ENCODE measurements at regions of chr18 and their contacts with region 1.

Region 1: GRCh38 chr18:21600526-21601410 is at the start of gene ESCO1:
- DNase-seq: peak; percentile 92
- ATAC-seq: peak; percentile 85
- H3K4me3 Mint-ChIP-seq: peak within 1 kb of the TSS; percentile 98
- H3K27ac Mint-ChIP-seq: peak within 1 kb of the TSS; percentile 100
- H3K4me1 Mint-ChIP-seq: peaks cover 14% of the 10 kb centered on the region
- H3K27me3 Mint-ChIP-seq: peaks cover 11% of the 10 kb centered on the region
- CTCF ChIP-seq: peak; percentile 98
- total RNA-seq, gene ESCO1: 35.2 to 46.5 TPM (median 35.5 TPM) in 3 replicates

Region 2: DNA sequence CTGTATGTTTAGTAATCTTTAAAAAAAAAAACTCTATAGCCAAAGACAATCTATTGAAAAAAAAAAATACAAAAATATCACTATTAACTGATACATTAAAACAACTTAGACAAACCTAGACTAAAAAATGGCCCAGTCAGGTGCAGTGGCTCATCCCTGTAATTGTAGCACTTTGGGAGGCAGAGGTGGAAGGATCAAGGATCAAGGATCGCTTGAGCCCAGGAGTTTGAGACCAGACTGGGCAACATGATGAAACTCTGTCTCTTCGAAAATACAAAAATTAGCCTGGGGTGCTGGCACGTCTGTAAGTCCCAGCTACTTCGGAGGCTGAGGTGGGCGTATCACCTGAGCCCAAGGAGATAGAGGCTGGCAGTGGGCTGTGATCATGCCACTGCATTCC is 16.4 kb before region 1 on chr18:
- CTCF ChIA-PET with region 1: interaction called, 14 read pairs
- POLR2A ChIA-PET with region 1: no interaction called
- DNase-seq: no peak
- ATAC-seq: no peak
- H3K4me3 Mint-ChIP-seq: no peak overlapping the region
- H3K27ac Mint-ChIP-seq: no peak overlapping the region
- H3K4me1 Mint-ChIP-seq: no peaks in the 10 kb centered on the region
- H3K27me3 Mint-ChIP-seq: no peaks in the 10 kb centered on the region
- CTCF ChIP-seq: no peak

Region 3: DNA sequence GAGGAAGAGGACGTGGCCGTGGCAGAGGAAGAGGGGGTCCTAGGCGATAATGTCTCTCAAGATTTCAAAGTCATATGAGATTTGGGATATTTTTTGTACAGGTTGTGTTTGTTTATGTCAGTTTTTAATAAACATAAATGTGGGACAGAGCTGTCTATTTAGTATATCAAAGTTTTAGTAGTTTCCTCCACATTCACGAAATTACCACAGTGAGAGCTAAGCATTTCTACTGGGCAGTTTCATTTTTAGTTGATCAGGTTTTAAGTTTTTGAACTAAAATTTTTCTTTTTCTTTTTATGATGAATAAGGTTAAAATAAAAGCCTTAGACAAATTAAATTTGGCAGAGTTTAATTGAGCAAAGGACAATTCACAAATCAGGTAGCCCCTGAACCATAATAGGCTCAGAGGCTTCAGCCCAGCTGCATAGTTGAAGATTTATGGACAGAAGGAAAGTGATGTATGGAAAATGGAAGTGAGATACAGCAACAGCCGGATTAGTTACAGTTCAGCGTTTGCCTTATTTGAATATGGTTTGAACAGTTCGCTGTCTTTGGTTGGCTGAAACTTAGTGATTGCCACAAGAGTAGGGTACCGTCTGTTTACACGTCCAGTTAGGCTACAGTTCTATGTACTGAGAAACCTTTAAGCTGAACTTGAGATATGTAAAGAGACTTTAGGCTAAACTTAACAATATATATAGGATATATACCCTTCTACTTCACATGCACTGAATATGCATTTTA is 28.5 kb after region 1 on chr18:
- CTCF ChIA-PET with region 1: interaction called, 12 read pairs
- POLR2A ChIA-PET with region 1: no interaction called
- DNase-seq: no peak
- ATAC-seq: no peak
- H3K4me3 Mint-ChIP-seq: no peak overlapping the region
- H3K27ac Mint-ChIP-seq: no peak overlapping the region
- H3K4me1 Mint-ChIP-seq: no peaks in the 10 kb centered on the region
- H3K27me3 Mint-ChIP-seq: no peaks in the 10 kb centered on the region
- CTCF ChIP-seq: no peak

Region 4: GRCh38 chr18:21682371-21683051 is 81.7 kb after region 1 on chr18:
- CTCF ChIA-PET with region 1: interaction called, 11 read pairs
- POLR2A ChIA-PET with region 1: no interaction called
- DNase-seq: no peak
- ATAC-seq: peak; percentile 60
- H3K4me3 Mint-ChIP-seq: no peak overlapping the region
- H3K27ac Mint-ChIP-seq: no peak overlapping the region
- H3K4me1 Mint-ChIP-seq: peaks cover 4% of the 10 kb centered on the region; the same call in 1 of the 2 replicates
- H3K27me3 Mint-ChIP-seq: no peaks in the 10 kb centered on the region
- CTCF ChIP-seq: no peak

Region 5: DNA sequence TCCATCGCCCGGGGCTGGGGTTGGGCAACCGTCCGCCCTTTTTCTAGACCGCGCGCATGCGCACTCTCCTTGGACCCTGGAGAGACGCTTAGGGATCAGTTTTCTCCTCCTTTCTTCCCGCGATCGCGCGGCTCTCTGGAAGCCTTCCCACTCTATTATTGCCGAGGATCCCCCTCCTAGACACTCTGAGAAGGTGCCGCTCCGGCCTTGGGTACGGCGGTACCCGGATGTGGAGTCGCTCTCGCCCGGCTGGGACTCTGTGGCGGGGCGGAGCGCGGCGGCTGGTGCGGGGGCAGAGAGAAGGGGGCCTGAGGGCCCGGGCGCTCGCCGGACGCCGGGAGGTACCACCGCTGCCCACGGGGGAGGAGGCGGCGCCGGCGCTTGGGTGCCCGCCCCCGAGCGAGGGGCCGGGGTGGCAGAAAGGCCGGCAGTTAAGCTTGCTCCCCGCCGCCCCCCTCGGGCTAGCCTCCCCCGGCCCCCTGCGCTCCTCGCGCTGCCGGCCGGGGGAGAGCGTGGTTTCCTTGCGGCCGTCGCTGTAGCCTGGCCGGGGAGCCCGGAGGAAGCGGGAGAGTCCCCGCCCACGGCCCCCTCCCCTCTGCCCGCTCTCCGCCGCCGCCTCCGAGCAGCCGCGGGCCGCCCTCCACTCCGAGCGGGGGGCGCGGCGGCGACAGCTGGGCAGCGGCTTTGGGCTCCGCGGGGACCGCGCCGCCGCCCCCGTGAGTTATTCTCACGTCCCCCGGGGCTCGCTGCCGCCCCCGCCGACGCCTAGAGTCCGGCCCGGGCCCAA is 140.1 kb after region 1 on chr18 and contains the start of gene MIB1:
- CTCF ChIA-PET with region 1: interaction called, 17 read pairs
- POLR2A ChIA-PET with region 1: interaction called, 16 read pairs
- DNase-seq: peak; percentile 59
- ATAC-seq: peak; percentile 63
- H3K4me3 Mint-ChIP-seq: peak within 1 kb of the TSS; percentile 87
- H3K27ac Mint-ChIP-seq: peak within 1 kb of the TSS; percentile 95
- H3K4me1 Mint-ChIP-seq: peaks cover 44% of the 10 kb centered on the region
- H3K27me3 Mint-ChIP-seq: peaks cover 9% of the 10 kb centered on the region
- CTCF ChIP-seq: no peak
- total RNA-seq, gene MIB1: 57.6 to 63.9 TPM (median 58.8 TPM) in 3 replicates

Measured in WTC11 (cell line).